PC-3 (cell line): ENCODE measurements at regions of chr18 and their contacts with region 1.

Region 1: GRCh38 chr18:2325308-2325849 is 245.9 kb downstream of the METTL4 start:
- DNase-seq: no peak
- ATAC-seq: no peak
- H3K4me3 ChIP-seq: no peak overlapping the region
- H3K27ac ChIP-seq: no peak overlapping the region
- H3K4me1 ChIP-seq: no peaks in the 10 kb centered on the region
- H3K27me3 ChIP-seq: no peaks in the 10 kb centered on the region
- CTCF ChIP-seq: no peak

Region 2: GRCh38 chr18:1840878-1841277 is 484.5 kb before region 1 on chr18:
- CTCF ChIA-PET with region 1: no interaction called
- POLR2A ChIA-PET with region 1: interaction called, 14 read pairs
- intact Hi-C with region 1: no loop called
- DNase-seq: no peak
- ATAC-seq: no peak
- H3K4me3 ChIP-seq: no peak overlapping the region
- H3K27ac ChIP-seq: no peak overlapping the region
- H3K4me1 ChIP-seq: no peaks in the 10 kb centered on the region
- H3K27me3 ChIP-seq: peaks cover 34% of the 10 kb centered on the region
- CTCF ChIP-seq: no peak

Region 3: DNA sequence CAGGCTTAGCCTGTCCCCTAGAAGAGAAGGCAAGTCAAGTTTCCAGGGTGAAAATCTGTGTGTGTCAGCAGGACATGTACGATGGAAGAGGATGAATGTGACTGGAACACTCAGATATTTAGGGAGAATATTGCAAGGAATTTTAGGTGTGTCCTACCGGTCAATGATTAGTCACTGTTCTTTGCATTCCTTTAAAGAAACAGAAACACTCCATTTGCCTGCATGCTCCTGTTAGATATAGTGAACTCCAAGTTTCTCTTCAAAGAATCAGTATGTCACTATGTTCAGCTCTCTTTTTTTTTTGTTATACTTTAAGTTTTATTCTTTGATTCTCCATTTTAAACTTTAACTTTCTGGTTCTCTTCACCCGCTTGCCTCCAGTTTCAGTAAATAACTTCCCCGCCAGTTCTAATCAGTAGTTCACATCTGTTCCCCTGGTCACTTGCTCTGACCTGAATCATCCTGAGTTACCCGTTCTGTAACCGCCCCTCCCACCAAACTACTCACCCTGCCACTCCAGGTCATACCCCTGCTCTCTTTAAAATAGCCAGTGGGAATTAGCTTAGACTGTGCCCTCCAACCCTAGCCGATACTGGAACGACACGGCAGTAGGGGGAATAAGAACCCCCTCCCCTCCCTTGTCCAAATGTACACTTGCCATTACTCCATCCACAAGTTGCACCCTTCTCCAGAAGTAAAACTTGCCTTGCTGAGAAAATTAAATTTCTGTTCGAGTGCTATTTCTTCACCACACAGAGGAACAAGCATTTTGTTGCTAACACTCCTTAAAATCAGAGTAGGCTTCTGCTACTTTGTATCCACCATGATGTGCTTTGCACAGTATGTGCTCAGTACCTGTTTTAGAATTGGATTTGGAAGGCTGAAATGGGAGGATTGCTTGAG is 22.5 kb before region 1 on chr18:
- CTCF ChIA-PET with region 1: no interaction called
- POLR2A ChIA-PET with region 1: no interaction called
- intact Hi-C with region 1: no loop called
- DNase-seq: peak; percentile 93
- ATAC-seq: peak; percentile 78
- H3K4me3 ChIP-seq: peak overlapping the region; percentile 44
- H3K27ac ChIP-seq: peak overlapping the region; percentile 93
- H3K4me1 ChIP-seq: peaks cover 51% of the 10 kb centered on the region
- H3K27me3 ChIP-seq: no peaks in the 10 kb centered on the region
- CTCF ChIP-seq: no peak

Region 4: GRCh38 chr18:2406544-2406943 is 81.2 kb after region 1 on chr18:
- CTCF ChIA-PET with region 1: no interaction called
- POLR2A ChIA-PET with region 1: no interaction called
- intact Hi-C with region 1: no loop called
- DNase-seq: peak; percentile 20
- ATAC-seq: peak; percentile 26; the same call in 1 of the 2 replicates
- H3K4me3 ChIP-seq: no peak overlapping the region
- H3K27ac ChIP-seq: no peak overlapping the region
- H3K4me1 ChIP-seq: peaks cover 18% of the 10 kb centered on the region
- H3K27me3 ChIP-seq: no peaks in the 10 kb centered on the region
- CTCF ChIP-seq: no peak